ENCODE measurements at regions of chr2 and their contacts with region 1.

Region 1: GRCh38 chr2:68196120-68196716 is 38.5 kb downstream of the PNO1 start:
- DNase-seq: no peak
- ATAC-seq: peak; percentile 37
- H3K4me3 Mint-ChIP-seq: no peak overlapping the region
- H3K27ac Mint-ChIP-seq: peak overlapping the region; percentile 41
- H3K4me1 Mint-ChIP-seq: peaks cover 58% of the 10 kb centered on the region
- H3K27me3 Mint-ChIP-seq: no peaks in the 10 kb centered on the region
- CTCF ChIP-seq: peak; percentile 36

Region 2: DNA sequence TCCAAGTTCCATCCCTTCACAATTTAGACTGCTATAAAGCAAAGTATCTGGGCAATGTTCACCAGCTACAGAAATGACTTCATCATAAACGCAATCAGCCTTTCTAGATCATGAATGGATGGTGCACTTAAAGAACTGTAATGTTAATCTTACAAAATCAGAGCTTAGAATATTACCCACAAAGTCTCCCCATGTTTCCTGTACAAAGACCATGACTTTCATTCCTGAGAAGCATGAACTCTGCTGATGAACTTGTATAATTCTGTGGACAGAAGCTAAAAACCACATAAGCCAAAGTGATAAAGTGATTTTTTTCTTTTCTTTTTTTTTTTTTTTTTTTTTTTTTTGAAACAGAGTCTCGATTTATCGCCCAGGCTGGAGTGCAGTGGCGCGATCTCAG is 186.7 kb before region 1 on chr2:
- CTCF ChIA-PET with region 1: no interaction called
- POLR2A ChIA-PET with region 1: no interaction called
- intact Hi-C with region 1: no loop called
- DNase-seq: no peak
- ATAC-seq: no peak
- H3K4me3 Mint-ChIP-seq: no peak overlapping the region
- H3K27ac Mint-ChIP-seq: no peak overlapping the region
- H3K4me1 Mint-ChIP-seq: no peaks in the 10 kb centered on the region
- H3K27me3 Mint-ChIP-seq: peaks cover 19% of the 10 kb centered on the region
- CTCF ChIP-seq: no peak

Region 3: DNA sequence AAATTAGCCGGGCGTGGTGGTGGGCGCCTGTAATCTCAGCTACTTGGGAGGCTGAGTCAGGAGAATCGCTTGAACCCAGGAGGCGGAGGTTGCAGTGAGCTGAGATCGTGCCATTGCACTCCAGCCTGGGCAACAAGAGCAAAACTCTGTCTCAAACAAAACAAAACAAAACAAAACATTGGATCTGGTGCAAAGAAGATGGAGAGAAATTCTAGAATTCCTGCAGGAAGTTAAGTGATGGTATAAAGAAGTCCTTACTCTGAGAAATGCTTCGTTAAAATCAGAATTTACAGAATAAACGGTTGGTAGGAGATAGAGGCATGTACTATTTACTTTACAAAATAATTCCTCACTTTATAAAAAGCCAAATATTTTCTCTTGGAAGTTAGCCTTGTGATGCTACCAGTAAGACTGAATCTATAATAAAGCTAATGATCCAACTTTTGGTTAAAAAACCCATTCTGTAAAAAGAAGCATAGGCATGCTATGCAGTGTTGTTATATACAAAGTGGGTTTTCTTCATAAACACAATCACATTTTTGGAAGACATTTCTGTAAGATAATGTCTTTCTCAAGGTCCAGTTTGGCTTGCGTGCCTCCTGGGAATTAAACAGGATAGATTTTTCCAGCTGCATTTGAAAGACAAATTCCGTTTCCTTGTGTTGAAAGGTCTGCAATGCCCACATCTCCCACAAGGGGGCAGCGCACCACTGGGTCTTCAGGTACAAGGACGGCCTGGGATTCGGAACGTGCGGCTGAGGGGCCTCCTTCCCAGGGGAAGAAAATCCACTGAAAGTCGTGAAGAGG is 74.1 kb before region 1 on chr2:
- CTCF ChIA-PET with region 1: interaction called, 12 read pairs
- POLR2A ChIA-PET with region 1: no interaction called
- intact Hi-C with region 1: no loop called
- DNase-seq: peak; percentile 69
- ATAC-seq: peak; percentile 26
- H3K4me3 Mint-ChIP-seq: peak overlapping the region; percentile 77
- H3K27ac Mint-ChIP-seq: peak overlapping the region; percentile 97
- H3K4me1 Mint-ChIP-seq: peaks cover 48% of the 10 kb centered on the region
- H3K27me3 Mint-ChIP-seq: no peaks in the 10 kb centered on the region
- CTCF ChIP-seq: peak; percentile 100

Region 4: GRCh38 chr2:68206793-68207192 is 10.6 kb after region 1 on chr2:
- CTCF ChIA-PET with region 1: interaction called, 16 read pairs
- POLR2A ChIA-PET with region 1: no interaction called
- intact Hi-C with region 1: no loop called
- DNase-seq: no peak
- ATAC-seq: no peak
- H3K4me3 Mint-ChIP-seq: no peak overlapping the region
- H3K27ac Mint-ChIP-seq: peak overlapping the region; percentile 81
- H3K4me1 Mint-ChIP-seq: peaks cover 61% of the 10 kb centered on the region
- H3K27me3 Mint-ChIP-seq: no peaks in the 10 kb centered on the region
- CTCF ChIP-seq: no peak

Region 5: DNA sequence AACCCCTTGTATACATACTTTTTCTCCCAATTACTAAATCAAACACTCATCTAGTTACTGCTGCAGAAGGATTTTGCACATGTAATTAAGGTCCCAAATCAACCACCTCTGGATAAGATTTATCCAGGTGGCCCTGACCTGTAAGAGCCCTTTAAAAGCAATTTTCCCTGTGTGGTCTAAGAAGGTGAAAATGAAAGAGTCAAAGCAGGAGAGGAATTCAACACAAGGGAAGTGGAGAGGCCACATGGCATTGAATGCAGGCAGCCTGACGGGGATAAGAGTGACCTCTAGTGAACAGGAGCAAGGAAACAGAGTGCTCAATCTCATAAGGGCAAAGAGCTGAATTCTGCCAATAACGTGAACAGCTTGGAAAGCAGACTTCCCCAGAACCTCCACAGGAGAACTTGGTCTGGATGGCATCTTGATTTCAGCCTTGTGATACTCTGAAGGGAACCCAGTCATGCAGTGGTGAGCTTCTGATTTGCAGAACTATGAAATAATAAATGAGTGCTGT is 29.0 kb after region 1 on chr2:
- CTCF ChIA-PET with region 1: interaction called, 22 read pairs
- POLR2A ChIA-PET with region 1: interaction called, 4 read pairs
- intact Hi-C with region 1: loop called (anchors 1 kb)
- DNase-seq: no peak
- ATAC-seq: peak; percentile 49
- H3K4me3 Mint-ChIP-seq: peak overlapping the region; percentile 17
- H3K27ac Mint-ChIP-seq: peak overlapping the region; percentile 46
- H3K4me1 Mint-ChIP-seq: peaks cover 95% of the 10 kb centered on the region
- H3K27me3 Mint-ChIP-seq: no peaks in the 10 kb centered on the region
- CTCF ChIP-seq: no peak

Region 6: GRCh38 chr2:68244456-68244855 is 48.2 kb after region 1 on chr2:
- CTCF ChIA-PET with region 1: interaction called, 23 read pairs
- POLR2A ChIA-PET with region 1: interaction called, 3 read pairs
- intact Hi-C with region 1: no loop called
- DNase-seq: no peak
- ATAC-seq: no peak
- H3K4me3 Mint-ChIP-seq: no peak overlapping the region
- H3K27ac Mint-ChIP-seq: no peak overlapping the region
- H3K4me1 Mint-ChIP-seq: peaks cover 30% of the 10 kb centered on the region
- H3K27me3 Mint-ChIP-seq: no peaks in the 10 kb centered on the region
- CTCF ChIP-seq: no peak

Region 7: GRCh38 chr2:68282811-68283418 is 86.7 kb after region 1 on chr2:
- CTCF ChIA-PET with region 1: interaction called, 66 read pairs
- POLR2A ChIA-PET with region 1: interaction called, 3 read pairs
- intact Hi-C with region 1: loop called (anchors 1 kb)
- DNase-seq: no peak
- ATAC-seq: peak; percentile 69
- H3K4me3 Mint-ChIP-seq: no peak overlapping the region
- H3K27ac Mint-ChIP-seq: no peak overlapping the region
- H3K4me1 Mint-ChIP-seq: peaks cover 6% of the 10 kb centered on the region
- H3K27me3 Mint-ChIP-seq: no peaks in the 10 kb centered on the region
- CTCF ChIP-seq: peak; percentile 82

Region 8: DNA sequence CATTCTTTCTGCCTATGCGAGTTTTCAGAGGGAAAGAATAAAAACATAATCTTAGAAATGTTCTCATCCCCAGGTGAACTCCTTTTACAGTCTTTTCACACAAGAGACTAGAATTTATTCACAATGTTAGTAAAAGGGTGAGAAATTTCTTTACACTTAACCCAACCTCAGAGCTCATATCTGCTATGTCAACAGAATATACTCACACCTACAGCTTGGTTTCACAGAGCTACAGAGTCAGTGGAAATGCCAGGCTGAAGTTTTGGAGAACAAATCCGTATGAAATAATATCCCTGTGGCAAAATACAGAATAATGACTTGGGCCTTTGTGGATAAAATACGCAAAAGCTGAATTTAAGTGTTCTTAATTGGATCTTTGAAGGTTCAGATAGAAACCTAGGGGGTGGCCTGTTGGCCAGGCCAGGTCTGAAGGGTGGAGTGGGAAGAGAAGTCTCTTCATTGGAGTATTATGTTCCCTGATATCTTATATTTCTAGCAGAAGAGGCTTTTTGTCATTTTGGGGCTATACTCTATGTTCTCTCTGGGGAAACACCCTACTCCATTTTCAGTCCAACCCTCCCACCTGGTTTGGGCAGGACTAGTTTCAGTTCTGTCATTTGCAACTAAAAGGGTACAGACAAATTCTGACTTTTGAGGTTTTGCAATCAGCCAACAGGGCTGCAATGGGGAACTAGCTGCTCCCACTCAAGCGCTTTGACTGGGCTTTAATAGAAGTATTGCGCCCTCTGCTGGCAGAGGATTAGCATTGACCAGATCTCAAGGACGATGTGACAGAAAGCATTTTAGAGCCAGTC is 245.2 kb after region 1 on chr2:
- CTCF ChIA-PET with region 1: interaction called, 58 read pairs
- POLR2A ChIA-PET with region 1: interaction called, 10 read pairs
- intact Hi-C with region 1: loop called (anchors 1 kb)
- DNase-seq: peak; percentile 57
- ATAC-seq: peak; percentile 98
- H3K4me3 Mint-ChIP-seq: peak overlapping the region; percentile 65
- H3K27ac Mint-ChIP-seq: peak overlapping the region; percentile 95
- H3K4me1 Mint-ChIP-seq: peaks cover 51% of the 10 kb centered on the region
- H3K27me3 Mint-ChIP-seq: no peaks in the 10 kb centered on the region
- CTCF ChIP-seq: no peak

Region 9: DNA sequence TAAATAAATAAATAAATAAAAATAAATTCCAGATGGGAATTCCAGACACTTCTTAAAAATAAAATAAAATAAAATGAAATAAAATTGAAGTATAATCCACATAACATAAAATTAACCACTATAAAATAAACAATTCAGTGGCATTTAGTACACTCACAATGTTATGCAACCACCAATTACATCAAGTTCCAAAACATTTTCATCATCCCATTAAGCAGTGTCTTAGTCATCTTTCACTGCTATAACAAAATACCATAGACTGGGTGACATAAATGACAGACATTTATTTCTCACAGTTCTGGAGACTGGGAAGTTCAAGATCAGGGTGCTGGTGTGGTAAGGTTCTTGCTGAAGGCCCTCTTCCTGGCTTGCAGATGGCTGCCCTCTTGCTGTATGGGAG is 424.6 kb after region 1 on chr2:
- CTCF ChIA-PET with region 1: no interaction called
- POLR2A ChIA-PET with region 1: no interaction called
- intact Hi-C with region 1: no loop called
- DNase-seq: no peak
- ATAC-seq: no peak
- H3K4me3 Mint-ChIP-seq: no peak overlapping the region
- H3K27ac Mint-ChIP-seq: no peak overlapping the region
- H3K4me1 Mint-ChIP-seq: no peaks in the 10 kb centered on the region
- H3K27me3 Mint-ChIP-seq: no peaks in the 10 kb centered on the region
- CTCF ChIP-seq: no peak